AG04450 (cell line): ENCODE measurements at regions of chr1 and their contacts with region 1.

Region 1: DNA sequence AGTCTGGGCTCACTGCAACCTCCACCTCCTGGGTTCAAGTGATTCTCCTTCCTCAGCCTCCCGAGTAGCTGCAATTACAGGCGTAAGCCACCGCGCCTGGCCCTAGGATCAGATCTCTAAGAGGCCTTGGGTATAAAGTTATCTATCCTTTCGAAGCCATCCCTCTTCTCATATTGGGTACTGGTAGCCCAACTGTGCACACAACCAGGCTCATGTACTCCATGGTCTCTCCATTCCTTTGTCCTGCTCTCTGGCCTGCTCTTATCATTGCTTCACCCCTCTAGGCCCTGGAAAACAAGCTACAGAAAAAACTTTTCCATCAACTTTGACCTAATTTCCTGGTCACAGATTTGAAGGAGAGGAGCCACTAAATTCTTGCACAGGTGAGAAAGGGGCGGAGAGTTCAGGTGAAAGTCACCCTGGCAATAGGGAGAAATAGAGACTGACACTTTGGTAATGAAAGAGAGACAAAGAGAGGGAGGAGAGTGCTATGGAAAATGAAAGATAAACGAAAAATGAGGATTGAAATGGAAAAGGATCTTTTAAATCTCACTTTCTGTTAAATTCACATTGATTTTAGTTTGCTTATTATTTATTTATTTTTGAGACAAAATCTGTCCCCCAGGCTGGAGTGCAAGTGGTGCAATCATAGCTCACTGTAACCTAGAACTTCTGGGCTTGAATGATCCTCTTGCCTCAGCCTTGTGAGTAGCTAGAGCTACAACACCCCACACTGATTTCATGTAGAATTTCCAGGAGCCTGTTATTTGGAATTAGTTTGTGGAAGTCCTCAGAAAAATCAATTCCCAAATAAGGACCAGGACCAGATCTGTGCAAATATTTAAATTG is 5.9 kb downstream of the TXNIP start:
- DNase-seq: no peak
- H3K4me3 ChIP-seq: no peak overlapping the region
- H3K27ac ChIP-seq: no peak overlapping the region
- H3K27me3 ChIP-seq: no peaks in the 10 kb centered on the region
- CTCF ChIP-seq: no peak

Region 2: DNA sequence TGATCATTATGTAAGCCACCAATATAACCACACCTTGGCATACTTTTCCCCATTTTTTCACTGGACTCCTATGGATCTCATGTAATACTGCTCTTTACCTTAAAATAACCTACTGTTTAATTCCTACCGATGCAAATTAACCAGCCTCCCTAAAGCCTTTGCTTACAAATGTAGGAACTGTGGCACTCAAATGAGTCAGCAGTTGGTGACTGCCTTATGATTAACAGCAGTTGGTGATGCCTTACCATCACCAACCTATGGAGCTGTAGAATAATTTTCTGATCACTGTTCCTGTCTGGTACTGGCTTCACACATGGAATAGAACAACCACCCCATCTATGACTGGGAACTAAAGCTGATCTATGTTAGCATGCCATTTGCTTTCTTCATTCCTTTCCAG is 152.8 kb before region 1 on chr1:
- CTCF ChIA-PET with region 1: no interaction called
- POLR2A ChIA-PET with region 1: interaction called, 12 read pairs
- DNase-seq: no peak
- H3K4me3 ChIP-seq: no peak overlapping the region
- H3K27ac ChIP-seq: no peak overlapping the region
- H3K27me3 ChIP-seq: no peaks in the 10 kb centered on the region
- CTCF ChIP-seq: no peak

Region 3: GRCh38 chr1:146046664-146047063 is 56.2 kb after region 1 on chr1:
- CTCF ChIA-PET with region 1: no interaction called
- POLR2A ChIA-PET with region 1: no interaction called
- DNase-seq: no peak
- H3K4me3 ChIP-seq: no peak overlapping the region
- H3K27ac ChIP-seq: no peak overlapping the region
- H3K27me3 ChIP-seq: no peaks in the 10 kb centered on the region
- CTCF ChIP-seq: no peak